Activated CD4-positive, alpha-beta memory T cell treated with anti-CD3 and anti-CD28 coated beads for 36 hours (primary cell): ENCODE measurements at regions of chr13 and their contacts with region 1.

Region 1: GRCh38 chr13:24574847-24575246 is 62.3 kb upstream of the PARP4 start:
- DNase-seq: no peak
- H3K4me3 Mint-ChIP-seq: no peak overlapping the region
- H3K27ac Mint-ChIP-seq: peak overlapping the region; percentile 5
- H3K4me1 Mint-ChIP-seq: peaks cover 15% of the 10 kb centered on the region
- H3K27me3 Mint-ChIP-seq: peaks cover 11% of the 10 kb centered on the region

Region 2: DNA sequence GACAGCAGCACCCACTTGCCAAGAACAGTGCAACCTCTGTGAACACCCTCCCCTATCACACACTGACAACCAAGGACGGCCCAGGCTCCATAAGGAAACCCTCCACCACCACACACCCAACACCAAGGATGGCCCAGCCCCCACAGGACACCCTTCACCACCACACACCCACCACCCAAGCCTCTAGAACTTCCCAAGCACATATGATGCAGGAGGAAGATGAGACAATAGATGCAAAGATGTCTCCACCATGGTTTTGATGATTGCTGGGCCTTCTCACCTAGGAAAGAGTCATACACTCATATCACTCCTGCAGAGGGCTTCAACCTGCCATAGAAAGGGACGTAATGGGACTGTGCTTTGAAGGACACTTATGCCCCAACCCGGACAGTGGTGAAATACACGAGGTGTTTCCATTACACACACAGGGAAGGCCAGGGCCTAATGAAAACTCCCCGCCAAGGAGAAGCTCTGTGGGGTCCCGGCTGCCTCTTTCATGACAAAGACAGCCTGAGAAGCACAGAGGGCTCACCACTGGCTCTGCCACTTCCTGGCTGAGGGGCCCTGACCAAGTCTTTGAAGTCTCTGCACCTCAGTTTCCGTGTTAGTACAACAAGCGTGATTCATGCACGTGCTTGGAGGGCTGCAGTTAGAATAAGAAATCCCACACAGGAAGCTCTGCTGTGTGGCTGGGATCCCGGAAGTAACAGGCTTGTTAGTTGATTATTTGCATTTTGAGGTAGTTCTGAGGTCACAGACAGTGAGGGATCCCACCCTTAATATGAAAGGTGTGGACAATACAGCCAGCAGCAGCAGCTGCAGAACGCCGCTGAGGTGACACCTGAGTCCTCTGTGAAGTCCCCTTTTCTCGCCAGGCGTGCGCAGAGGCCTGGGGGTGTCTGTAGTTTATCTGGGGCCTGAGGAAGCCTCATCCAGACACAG is 43.4 kb after region 1 on chr13:
- CTCF ChIA-PET with region 1: interaction called, 3 read pairs
- POLR2A ChIA-PET with region 1: no interaction called
- intact Hi-C with region 1: loop called (anchors 2 kb)
- DNase-seq: peak; percentile 87
- H3K4me3 Mint-ChIP-seq: peak overlapping the region; percentile 23
- H3K27ac Mint-ChIP-seq: peak overlapping the region; percentile 81
- H3K4me1 Mint-ChIP-seq: peaks cover 28% of the 10 kb centered on the region
- H3K27me3 Mint-ChIP-seq: no peaks in the 10 kb centered on the region

Region 3: GRCh38 chr13:24644036-24644435 is 69.2 kb after region 1 on chr13:
- CTCF ChIA-PET with region 1: no interaction called
- POLR2A ChIA-PET with region 1: no interaction called
- intact Hi-C with region 1: no loop called
- DNase-seq: no peak
- H3K4me3 Mint-ChIP-seq: no peak overlapping the region
- H3K27ac Mint-ChIP-seq: no peak overlapping the region
- H3K4me1 Mint-ChIP-seq: peaks cover 8% of the 10 kb centered on the region
- H3K27me3 Mint-ChIP-seq: peaks cover 12% of the 10 kb centered on the region

Region 4: GRCh38 chr13:24671386-24672107 is 96.7 kb after region 1 on chr13:
- CTCF ChIA-PET with region 1: interaction called, 14 read pairs
- POLR2A ChIA-PET with region 1: no interaction called
- intact Hi-C with region 1: loop called (anchors 2 kb)
- DNase-seq: no peak
- H3K4me3 Mint-ChIP-seq: no peak overlapping the region
- H3K27ac Mint-ChIP-seq: no peak overlapping the region
- H3K4me1 Mint-ChIP-seq: peaks cover 10% of the 10 kb centered on the region
- H3K27me3 Mint-ChIP-seq: peaks cover 12% of the 10 kb centered on the region